ENCODE measurements at regions of chr19 and their contacts with region 1.

Region 1: GRCh38 chr19:18007044-18007916 is 690 bp upstream of the ARRDC2 start:
- DNase-seq: peak; percentile 80
- H3K4me3 Mint-ChIP-seq: peak overlapping the region; percentile 69
- H3K27ac Mint-ChIP-seq: no peak overlapping the region
- H3K4me1 Mint-ChIP-seq: peaks cover 14% of the 10 kb centered on the region
- H3K27me3 Mint-ChIP-seq: no peaks in the 10 kb centered on the region
- CTCF ChIP-seq: peak; percentile 99

Region 2: GRCh38 chr19:17348700-17349099 is 658.6 kb before region 1 on chr19:
- CTCF ChIA-PET with region 1: no interaction called
- POLR2A ChIA-PET with region 1: no interaction called
- intact Hi-C with region 1: no loop called
- DNase-seq: peak; percentile 87
- H3K4me3 Mint-ChIP-seq: no peak overlapping the region
- H3K27ac Mint-ChIP-seq: peak overlapping the region; percentile 9
- H3K4me1 Mint-ChIP-seq: peaks cover 15% of the 10 kb centered on the region
- H3K27me3 Mint-ChIP-seq: no peaks in the 10 kb centered on the region
- CTCF ChIP-seq: no peak

Region 3: GRCh38 chr19:17747205-17748098 is 259.8 kb before region 1 on chr19:
- CTCF ChIA-PET with region 1: no interaction called
- POLR2A ChIA-PET with region 1: no interaction called
- intact Hi-C with region 1: no loop called
- DNase-seq: peak; percentile 95
- H3K4me3 Mint-ChIP-seq: peak overlapping the region; percentile 31
- H3K27ac Mint-ChIP-seq: no peak overlapping the region
- H3K4me1 Mint-ChIP-seq: no peaks in the 10 kb centered on the region
- H3K27me3 Mint-ChIP-seq: no peaks in the 10 kb centered on the region
- CTCF ChIP-seq: no peak

Region 4: GRCh38 chr19:17821190-17821589 is 186.1 kb before region 1 on chr19 and contains the start of gene INSL3:
- CTCF ChIA-PET with region 1: no interaction called
- POLR2A ChIA-PET with region 1: no interaction called
- intact Hi-C with region 1: no loop called
- DNase-seq: no peak
- H3K4me3 Mint-ChIP-seq: no peak within 1 kb of the TSS
- H3K27ac Mint-ChIP-seq: no peak within 1 kb of the TSS
- H3K4me1 Mint-ChIP-seq: no peaks in the 10 kb centered on the region
- H3K27me3 Mint-ChIP-seq: peaks cover 13% of the 10 kb centered on the region
- CTCF ChIP-seq: no peak
- total RNA-seq, gene INSL3: not detected in 2 replicates

Region 5: DNA sequence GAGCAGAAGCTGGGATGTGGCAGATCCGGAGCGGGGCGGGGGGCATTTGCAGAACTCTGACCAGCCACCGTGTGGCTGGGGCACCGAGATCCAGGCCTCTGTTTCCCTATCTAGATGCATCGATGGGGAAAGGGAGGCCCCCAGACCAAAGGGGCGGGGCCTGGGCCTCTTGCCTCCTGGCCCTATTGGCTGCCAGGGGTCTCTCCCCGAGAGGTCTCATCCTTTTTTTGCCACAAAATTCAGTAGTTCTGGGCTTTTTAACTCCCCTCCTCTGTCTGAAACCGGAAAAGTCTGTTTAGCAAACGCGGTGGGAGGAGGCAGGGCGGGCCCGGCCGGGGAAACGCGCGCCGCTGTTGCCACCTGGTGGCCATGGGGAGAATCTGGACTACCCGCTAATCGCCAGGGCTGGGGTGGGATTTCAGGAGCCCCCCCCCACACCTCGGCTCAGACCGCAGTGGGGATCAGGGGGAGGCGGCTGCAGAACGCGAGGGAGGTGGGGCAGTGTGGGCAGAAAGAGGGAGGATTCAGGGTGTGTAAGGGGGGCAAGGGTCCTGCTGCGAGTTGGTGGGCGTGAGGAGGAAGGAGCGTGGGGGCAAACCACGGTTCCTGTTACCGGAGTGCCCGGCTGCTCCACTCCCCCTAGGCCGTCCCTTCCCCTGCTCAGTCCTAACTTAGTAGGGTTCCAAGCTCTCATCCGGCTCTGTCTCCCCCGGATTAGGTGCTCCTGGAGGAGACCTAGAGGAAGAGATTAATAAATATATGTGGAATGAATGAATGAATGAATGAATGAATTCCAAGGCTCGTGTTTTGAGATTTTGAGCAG is 51.1 kb after region 1 on chr19:
- CTCF ChIA-PET with region 1: interaction called, 103 read pairs
- POLR2A ChIA-PET with region 1: interaction called, 4 read pairs
- intact Hi-C with region 1: loop called (anchors 1 kb)
- DNase-seq: peak; percentile 80
- H3K4me3 Mint-ChIP-seq: no peak overlapping the region
- H3K27ac Mint-ChIP-seq: peak overlapping the region; percentile 57
- H3K4me1 Mint-ChIP-seq: peaks cover 5% of the 10 kb centered on the region
- H3K27me3 Mint-ChIP-seq: no peaks in the 10 kb centered on the region
- CTCF ChIP-seq: peak; percentile 88

Measured in MCF 10A (cell line).